ENCODE measurements at regions of chr14 and their contacts with region 1.

Region 1: DNA sequence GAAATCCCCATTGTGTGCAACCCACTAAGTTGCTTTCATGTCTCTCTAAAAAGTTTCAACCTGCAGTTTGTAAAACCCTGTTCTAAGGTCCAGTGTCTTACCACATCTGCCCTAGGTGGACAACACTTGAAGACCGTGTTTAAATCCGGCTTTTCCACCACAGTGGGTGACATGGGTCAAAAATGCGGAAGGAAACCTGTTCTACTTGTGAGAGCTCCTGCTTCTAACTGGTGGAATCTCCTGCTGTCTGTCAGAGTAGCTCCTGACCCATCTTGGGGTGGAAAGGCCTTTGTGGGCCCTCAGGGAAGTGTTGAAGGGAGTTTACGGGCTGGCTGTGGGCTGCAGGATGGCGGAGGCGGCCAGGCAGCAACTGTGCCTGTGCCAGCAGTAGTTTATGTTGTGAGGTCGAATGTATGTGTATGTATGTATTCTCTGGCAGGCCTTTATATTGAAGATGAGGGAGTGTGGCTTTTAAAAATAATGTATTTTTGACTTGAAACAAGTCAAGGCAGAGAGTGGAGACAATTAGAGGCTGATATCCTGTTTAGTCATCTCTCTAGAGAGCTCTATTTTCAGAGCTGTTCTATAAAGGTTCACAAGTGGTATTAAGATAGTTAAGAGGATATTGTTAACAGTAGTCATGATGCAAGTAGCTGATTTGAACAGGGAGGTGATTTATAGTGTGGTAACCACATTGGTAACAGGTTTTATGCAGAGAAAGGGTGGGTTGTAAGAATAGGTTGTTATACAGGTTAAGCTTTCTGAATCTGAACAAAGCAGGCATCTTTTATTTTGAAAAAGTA is 67.0 kb downstream of the PRKCH start:
- DNase-seq: peak; percentile 76
- ATAC-seq: peak; percentile 72
- H3K4me3 Mint-ChIP-seq: no peak overlapping the region
- H3K27ac Mint-ChIP-seq: no peak overlapping the region
- H3K4me1 Mint-ChIP-seq: peaks cover 30% of the 10 kb centered on the region
- H3K27me3 Mint-ChIP-seq: no peaks in the 10 kb centered on the region
- CTCF ChIP-seq: no peak

Region 2: DNA sequence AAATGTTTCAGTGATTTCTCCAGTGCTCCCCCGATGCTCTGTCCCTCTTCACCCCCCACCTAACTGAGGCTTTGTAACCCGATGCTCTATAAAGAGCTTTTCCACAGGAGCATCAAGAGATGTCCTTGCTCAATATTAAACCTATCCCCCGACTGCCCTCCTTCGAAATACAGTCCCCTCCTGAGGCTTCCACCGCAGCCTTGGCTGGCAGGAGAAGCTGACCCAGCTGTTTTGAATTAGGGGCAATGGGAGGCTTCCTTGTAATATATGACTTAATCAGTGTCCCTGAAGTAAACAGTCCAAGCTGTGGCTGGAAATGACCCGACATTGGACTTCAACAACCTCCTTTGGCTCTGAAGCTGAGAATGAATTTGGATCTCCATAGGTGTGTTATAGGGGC is 169.6 kb before region 1 on chr14:
- CTCF ChIA-PET with region 1: no interaction called
- POLR2A ChIA-PET with region 1: no interaction called
- intact Hi-C with region 1: no loop called
- DNase-seq: no peak
- ATAC-seq: no peak
- H3K4me3 Mint-ChIP-seq: no peak overlapping the region
- H3K27ac Mint-ChIP-seq: no peak overlapping the region
- H3K4me1 Mint-ChIP-seq: peaks cover 6% of the 10 kb centered on the region
- H3K27me3 Mint-ChIP-seq: peaks cover 30% of the 10 kb centered on the region
- CTCF ChIP-seq: no peak

Region 3: GRCh38 chr14:61326847-61327246 is 61.5 kb before region 1 on chr14:
- CTCF ChIA-PET with region 1: interaction called, 5 read pairs
- POLR2A ChIA-PET with region 1: interaction called, 31 read pairs
- intact Hi-C with region 1: loop called (anchors 2 kb)
- DNase-seq: no peak
- ATAC-seq: no peak
- H3K4me3 Mint-ChIP-seq: peak overlapping the region; percentile 99
- H3K27ac Mint-ChIP-seq: peak overlapping the region; percentile 93
- H3K4me1 Mint-ChIP-seq: peaks cover 57% of the 10 kb centered on the region
- H3K27me3 Mint-ChIP-seq: no peaks in the 10 kb centered on the region
- CTCF ChIP-seq: no peak

Region 4: GRCh38 chr14:61360796-61361525 is 27.4 kb before region 1 on chr14:
- CTCF ChIA-PET with region 1: interaction called, 3 read pairs
- POLR2A ChIA-PET with region 1: interaction called, 10 read pairs
- intact Hi-C with region 1: no loop called
- DNase-seq: peak; percentile 61
- ATAC-seq: peak; percentile 60
- H3K4me3 Mint-ChIP-seq: peak overlapping the region; percentile 20
- H3K27ac Mint-ChIP-seq: peak overlapping the region; percentile 83
- H3K4me1 Mint-ChIP-seq: peaks cover 52% of the 10 kb centered on the region
- H3K27me3 Mint-ChIP-seq: no peaks in the 10 kb centered on the region
- CTCF ChIP-seq: no peak

Region 5: DNA sequence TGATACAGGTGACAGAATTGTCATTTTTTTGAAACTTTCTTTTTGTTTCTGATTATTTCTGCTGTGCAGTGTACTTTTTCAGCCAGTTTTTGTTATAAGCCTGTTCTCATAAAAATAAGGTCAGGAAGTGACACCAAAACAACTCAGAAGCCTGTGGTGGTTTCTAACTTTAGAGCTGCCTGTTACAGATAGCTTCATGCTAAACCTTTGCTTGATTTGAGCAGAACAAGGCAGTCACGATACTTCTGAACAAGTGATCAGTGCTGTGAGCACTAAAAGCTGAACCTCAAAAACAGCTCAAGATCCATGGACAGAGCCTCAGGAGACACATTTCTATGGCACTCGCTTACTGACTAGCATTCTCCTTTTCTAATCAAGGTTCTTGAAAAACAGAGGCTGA is 15.0 kb after region 1 on chr14:
- CTCF ChIA-PET with region 1: interaction called, 9 read pairs
- POLR2A ChIA-PET with region 1: interaction called, 48 read pairs
- intact Hi-C with region 1: no loop called
- DNase-seq: no peak
- ATAC-seq: peak; percentile 64
- H3K4me3 Mint-ChIP-seq: peak overlapping the region; percentile 53
- H3K27ac Mint-ChIP-seq: peak overlapping the region; percentile 95
- H3K4me1 Mint-ChIP-seq: peaks cover 81% of the 10 kb centered on the region
- H3K27me3 Mint-ChIP-seq: no peaks in the 10 kb centered on the region
- CTCF ChIP-seq: no peak

Region 6: GRCh38 chr14:61456720-61457119 is 68.3 kb after region 1 on chr14:
- CTCF ChIA-PET with region 1: interaction called, 5 read pairs
- POLR2A ChIA-PET with region 1: interaction called, 6 read pairs
- intact Hi-C with region 1: loop called (anchors 5 kb)
- DNase-seq: peak; percentile 92
- ATAC-seq: no peak
- H3K4me3 Mint-ChIP-seq: no peak overlapping the region
- H3K27ac Mint-ChIP-seq: peak overlapping the region; percentile 84
- H3K4me1 Mint-ChIP-seq: peaks cover 82% of the 10 kb centered on the region
- H3K27me3 Mint-ChIP-seq: no peaks in the 10 kb centered on the region
- CTCF ChIP-seq: peak; percentile 92

Region 7: GRCh38 chr14:61527325-61528100 is 139.1 kb after region 1 on chr14:
- CTCF ChIA-PET with region 1: no interaction called
- POLR2A ChIA-PET with region 1: no interaction called
- intact Hi-C with region 1: no loop called
- DNase-seq: peak; percentile 31
- ATAC-seq: no peak
- H3K4me3 Mint-ChIP-seq: no peak overlapping the region
- H3K27ac Mint-ChIP-seq: peak overlapping the region; percentile 87
- H3K4me1 Mint-ChIP-seq: peaks cover 94% of the 10 kb centered on the region
- H3K27me3 Mint-ChIP-seq: no peaks in the 10 kb centered on the region
- CTCF ChIP-seq: no peak

Measured in activated CD8-positive, alpha-beta T cell treated with anti-CD3 and anti-CD28 coated beads for 36 hours (primary cell).